Left ventricle myocardium inferior (tissue), 1 donor: ENCODE measurements at regions of chr14 and their contacts with region 1.

Region 1: GRCh38 chr14:29548948-29549370 is 378.7 kb downstream of the PRKD1 start:
- DNase-seq: no peak
- H3K4me3 ChIP-seq: no peak overlapping the region
- H3K27ac ChIP-seq: no peak overlapping the region
- H3K4me1 ChIP-seq: no peaks in the 10 kb centered on the region
- H3K27me3 ChIP-seq: peaks cover 18% of the 10 kb centered on the region
- CTCF ChIP-seq: peak; percentile 74

Region 2: GRCh38 chr14:30002859-30003258 is 453.9 kb after region 1 on chr14:
- intact Hi-C with region 1: loop called (anchors 2 kb)
- DNase-seq: no peak
- H3K4me3 ChIP-seq: no peak overlapping the region
- H3K27ac ChIP-seq: no peak overlapping the region
- H3K4me1 ChIP-seq: peaks cover 3% of the 10 kb centered on the region
- H3K27me3 ChIP-seq: no peaks in the 10 kb centered on the region
- CTCF ChIP-seq: no peak

Region 3: GRCh38 chr14:30214461-30215090 is 665.6 kb after region 1 on chr14:
- intact Hi-C with region 1: loop called (anchors 10 kb)
- DNase-seq: no peak
- H3K4me3 ChIP-seq: no peak overlapping the region
- H3K27ac ChIP-seq: no peak overlapping the region
- H3K4me1 ChIP-seq: no peaks in the 10 kb centered on the region
- H3K27me3 ChIP-seq: peaks cover 13% of the 10 kb centered on the region
- CTCF ChIP-seq: peak; percentile 68